CD4-positive, alpha-beta T cell (primary cell): ENCODE measurements at regions of chr1 and their contacts with region 1.

Region 1: DNA sequence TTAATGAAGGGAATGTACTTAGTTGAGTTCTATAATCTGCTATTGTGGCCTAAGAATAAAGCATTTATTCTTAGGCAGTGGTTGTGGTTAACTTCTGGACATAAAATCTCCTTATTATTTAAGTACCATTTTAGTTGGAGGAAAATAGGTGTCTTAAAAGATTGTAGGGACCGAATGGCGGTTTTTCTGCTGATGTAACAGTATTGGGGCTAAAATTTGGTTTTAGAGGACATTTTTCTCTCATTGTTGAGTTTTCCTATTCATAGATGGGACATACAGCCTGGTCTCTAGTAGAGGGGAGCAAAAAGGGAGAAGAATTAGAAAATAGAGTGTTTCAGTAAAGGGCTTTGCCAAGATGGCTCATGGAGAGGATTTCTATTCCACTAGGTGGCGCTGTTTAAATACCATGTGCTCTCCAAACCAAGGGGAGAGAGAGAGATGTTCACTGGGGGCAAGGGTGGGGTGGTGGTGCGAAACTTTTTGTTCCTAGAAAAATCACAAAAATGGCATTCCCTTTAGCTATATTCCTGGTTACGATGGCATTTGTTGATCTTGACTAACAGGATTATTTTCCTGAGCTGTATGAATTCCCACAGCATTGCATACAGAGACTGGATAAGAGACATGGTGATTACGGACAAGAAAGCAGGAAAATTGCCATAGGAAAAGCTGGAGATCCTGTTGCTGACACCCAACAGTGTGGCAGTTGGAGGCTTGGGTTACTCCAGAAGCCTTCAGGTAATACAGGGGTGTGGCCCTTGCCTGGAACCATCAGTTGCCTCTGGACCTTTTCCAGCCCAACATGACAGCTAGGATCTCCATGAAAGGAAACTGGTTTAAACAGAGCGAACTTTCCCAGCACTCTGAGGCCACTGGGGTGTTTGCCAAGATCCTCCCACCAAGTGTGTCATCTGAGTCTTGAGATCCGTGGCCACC is 18.2 kb upstream of the FCGR2A start:
- DNase-seq: peak in 9 of 14 experiments; percentile 7 to 82 (median 36)
- ATAC-seq: peak; percentile 51
- H3K4me3 ChIP-seq: no peak overlapping the region
- H3K4me3 Mint-ChIP-seq: no peak overlapping the region
- H3K27ac ChIP-seq: no peak overlapping the region
- H3K27ac Mint-ChIP-seq: no peak overlapping the region
- H3K4me1 ChIP-seq: peaks cover 6% of the 10 kb centered on the region
- H3K4me1 Mint-ChIP-seq: peaks cover 13% of the 10 kb centered on the region
- H3K27me3 ChIP-seq: peaks cover 0 to 20% of the 10 kb centered on the region in 2 experiments
- H3K27me3 Mint-ChIP-seq: peaks cover 47% of the 10 kb centered on the region
- CTCF ChIP-seq: peak; percentile 86

Region 2: DNA sequence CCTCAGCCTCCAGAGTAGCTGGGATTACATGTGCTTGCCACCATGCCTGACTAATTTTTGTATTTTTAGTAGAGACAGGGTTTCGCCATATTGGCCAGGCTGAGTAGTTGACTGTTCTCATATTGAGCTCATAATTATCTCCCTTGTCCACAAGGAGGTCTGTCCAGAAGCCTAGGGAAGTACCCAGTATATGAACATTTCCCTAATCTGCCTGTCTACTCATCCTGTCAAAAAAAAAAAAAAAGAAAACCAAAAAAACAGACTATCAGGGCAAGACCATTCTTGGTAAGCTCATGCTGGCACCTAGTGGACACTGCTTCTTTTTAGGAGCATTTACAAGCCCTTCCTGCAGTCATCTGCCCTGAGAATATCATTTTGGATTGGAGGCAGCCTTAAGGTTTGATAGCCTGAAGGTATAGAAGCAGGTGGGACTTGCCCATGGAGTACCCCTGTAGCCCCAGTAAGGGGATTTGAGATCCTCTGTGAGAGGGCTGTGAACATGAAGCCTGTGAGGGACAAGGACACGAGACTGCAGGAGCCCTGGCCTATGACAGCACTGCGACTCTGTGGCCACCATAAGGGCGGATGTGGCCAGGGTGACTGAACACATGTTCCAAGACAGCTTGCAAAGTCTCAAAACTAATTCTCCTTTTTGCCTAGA is 251.7 kb after region 1 on chr1:
- CTCF ChIA-PET with region 1: interaction called, 10 read pairs
- POLR2A ChIA-PET with region 1: no interaction called
- intact Hi-C with region 1: loop called (anchors 1 kb)
- DNase-seq: peak in 10 of 14 experiments; percentile 11 to 85 (median 33)
- ATAC-seq: peak; percentile 68
- H3K4me3 ChIP-seq: no peak overlapping the region
- H3K4me3 Mint-ChIP-seq: no peak overlapping the region
- H3K27ac ChIP-seq: no peak overlapping the region
- H3K27ac Mint-ChIP-seq: no peak overlapping the region
- H3K4me1 ChIP-seq: peaks cover 19% of the 10 kb centered on the region
- H3K4me1 Mint-ChIP-seq: peaks cover 20% of the 10 kb centered on the region
- H3K27me3 ChIP-seq: no peaks in the 10 kb centered on the region
- H3K27me3 Mint-ChIP-seq: peaks cover 22% of the 10 kb centered on the region
- CTCF ChIP-seq: peak; percentile 51

Region 3: GRCh38 chr1:162035241-162035640 is 548.2 kb after region 1 on chr1:
- CTCF ChIA-PET with region 1: no interaction called
- POLR2A ChIA-PET with region 1: no interaction called
- intact Hi-C with region 1: loop called in 1 of 2 experiments (anchors 10 kb)
- DNase-seq: no peak
- ATAC-seq: no peak
- H3K4me3 ChIP-seq: no peak overlapping the region
- H3K4me3 Mint-ChIP-seq: no peak overlapping the region
- H3K27ac ChIP-seq: no peak overlapping the region
- H3K27ac Mint-ChIP-seq: no peak overlapping the region
- H3K4me1 ChIP-seq: peaks cover 5% of the 10 kb centered on the region
- H3K4me1 Mint-ChIP-seq: no peaks in the 10 kb centered on the region
- H3K27me3 ChIP-seq: peaks cover 2 to 4% of the 10 kb centered on the region in 2 experiments
- H3K27me3 Mint-ChIP-seq: peaks cover 19% of the 10 kb centered on the region
- CTCF ChIP-seq: no peak